Activated B cell treated with CpG ODN at 0.5 μM for 24 hours (primary cell): ENCODE measurements at regions of chr16 and their contacts with region 1.

Region 1: GRCh38 chr16:8674413-8675022 is at the start of gene ABAT:
- DNase-seq: peak; percentile 87
- ATAC-seq: peak; percentile 99
- H3K4me3 Mint-ChIP-seq: peak within 1 kb of the TSS; percentile 90
- H3K27ac Mint-ChIP-seq: peak within 1 kb of the TSS; percentile 84
- H3K4me1 Mint-ChIP-seq: peaks cover 23% of the 10 kb centered on the region
- H3K27me3 Mint-ChIP-seq: no peaks in the 10 kb centered on the region
- CTCF ChIP-seq: no peak
- total RNA-seq, gene ABAT: 12.6 and 13.2 TPM in 2 replicates

Region 2: GRCh38 chr16:8621572-8622314 is 52.8 kb before region 1 on chr16 and contains the start of gene METTL22:
- CTCF ChIA-PET with region 1: no interaction called
- POLR2A ChIA-PET with region 1: interaction called, 3 read pairs
- intact Hi-C with region 1: loop called (anchors 1 kb)
- DNase-seq: peak; percentile 96
- ATAC-seq: peak; percentile 99
- H3K4me3 Mint-ChIP-seq: peak within 1 kb of the TSS; percentile 95
- H3K27ac Mint-ChIP-seq: peak within 1 kb of the TSS; percentile 79
- H3K4me1 Mint-ChIP-seq: peaks cover 13% of the 10 kb centered on the region
- H3K27me3 Mint-ChIP-seq: no peaks in the 10 kb centered on the region
- CTCF ChIP-seq: no peak
- total RNA-seq, gene METTL22: 36.4 and 49.6 TPM in 2 replicates

Region 3: DNA sequence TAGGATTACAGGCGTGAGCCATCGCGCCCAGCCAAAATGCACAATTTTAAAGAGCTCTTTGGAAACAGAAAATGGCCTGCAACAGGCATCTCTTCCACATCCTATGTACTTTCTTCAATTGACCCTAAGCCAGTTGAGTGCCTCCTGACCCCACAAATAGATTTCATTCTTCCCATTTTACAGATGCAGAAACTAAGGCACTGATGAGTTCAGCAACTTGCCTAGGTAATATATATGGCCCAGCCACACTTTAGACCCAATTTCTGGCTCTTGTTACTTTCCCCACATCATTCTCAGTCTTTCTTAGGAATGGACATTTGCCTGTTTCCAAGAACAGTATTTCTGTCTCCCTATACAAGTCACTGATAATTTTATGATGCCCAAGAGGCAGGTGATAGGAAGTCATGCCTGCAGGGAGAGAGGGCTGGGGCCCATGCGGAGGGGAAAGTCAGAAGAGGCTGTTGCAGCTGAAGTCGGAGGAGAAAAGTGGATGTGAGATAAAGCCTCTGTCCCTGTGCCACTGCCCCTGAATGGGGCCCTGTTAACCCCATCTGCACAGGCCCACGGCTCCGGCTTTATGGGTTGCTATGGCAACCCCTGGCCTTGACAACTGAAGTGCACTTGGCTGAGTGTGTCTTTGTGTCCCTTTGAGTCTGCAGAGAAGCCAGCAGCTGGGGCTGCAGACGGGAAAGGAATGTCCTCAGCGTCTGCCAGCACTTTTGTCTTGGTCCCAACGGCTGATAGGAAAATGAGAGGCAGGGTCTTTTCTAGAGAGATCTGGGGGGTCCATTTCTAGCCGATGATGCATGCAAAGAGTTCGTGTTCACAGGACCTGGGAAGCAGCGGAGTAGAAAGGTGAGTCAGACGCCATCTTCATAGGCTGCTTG is 45.8 kb after region 1 on chr16:
- CTCF ChIA-PET with region 1: no interaction called
- POLR2A ChIA-PET with region 1: no interaction called
- intact Hi-C with region 1: loop called (anchors 10 kb)
- DNase-seq: no peak
- ATAC-seq: peak; percentile 61
- H3K4me3 Mint-ChIP-seq: no peak overlapping the region
- H3K27ac Mint-ChIP-seq: no peak overlapping the region
- H3K4me1 Mint-ChIP-seq: no peaks in the 10 kb centered on the region
- H3K27me3 Mint-ChIP-seq: no peaks in the 10 kb centered on the region
- CTCF ChIP-seq: no peak

Region 4: GRCh38 chr16:8868416-8869211 is 194.1 kb after region 1 on chr16 and contains the start of gene CARHSP1:
- CTCF ChIA-PET with region 1: no interaction called
- POLR2A ChIA-PET with region 1: interaction called, 8 read pairs
- intact Hi-C with region 1: loop called (anchors 1 kb)
- DNase-seq: peak; percentile 77
- ATAC-seq: peak; percentile 79
- H3K4me3 Mint-ChIP-seq: peak within 1 kb of the TSS; percentile 93
- H3K27ac Mint-ChIP-seq: peak within 1 kb of the TSS; percentile 85
- H3K4me1 Mint-ChIP-seq: peaks cover 60% of the 10 kb centered on the region
- H3K27me3 Mint-ChIP-seq: no peaks in the 10 kb centered on the region
- CTCF ChIP-seq: no peak
- total RNA-seq, gene CARHSP1: 21.3 and 27.0 TPM in 2 replicates